Activated CD4-positive, alpha-beta memory T cell treated with anti-CD3 and anti-CD28 coated beads for 36 hours (primary cell): ENCODE measurements at regions of chr16 and their contacts with region 1.

Region 1: GRCh38 chr16:51818342-51818944 is 667.4 kb upstream of the SALL1 start:
- DNase-seq: peak; percentile 9
- H3K4me3 Mint-ChIP-seq: no peak overlapping the region
- H3K27ac Mint-ChIP-seq: no peak overlapping the region
- H3K4me1 Mint-ChIP-seq: no peaks in the 10 kb centered on the region
- H3K27me3 Mint-ChIP-seq: no peaks in the 10 kb centered on the region

Region 2: DNA sequence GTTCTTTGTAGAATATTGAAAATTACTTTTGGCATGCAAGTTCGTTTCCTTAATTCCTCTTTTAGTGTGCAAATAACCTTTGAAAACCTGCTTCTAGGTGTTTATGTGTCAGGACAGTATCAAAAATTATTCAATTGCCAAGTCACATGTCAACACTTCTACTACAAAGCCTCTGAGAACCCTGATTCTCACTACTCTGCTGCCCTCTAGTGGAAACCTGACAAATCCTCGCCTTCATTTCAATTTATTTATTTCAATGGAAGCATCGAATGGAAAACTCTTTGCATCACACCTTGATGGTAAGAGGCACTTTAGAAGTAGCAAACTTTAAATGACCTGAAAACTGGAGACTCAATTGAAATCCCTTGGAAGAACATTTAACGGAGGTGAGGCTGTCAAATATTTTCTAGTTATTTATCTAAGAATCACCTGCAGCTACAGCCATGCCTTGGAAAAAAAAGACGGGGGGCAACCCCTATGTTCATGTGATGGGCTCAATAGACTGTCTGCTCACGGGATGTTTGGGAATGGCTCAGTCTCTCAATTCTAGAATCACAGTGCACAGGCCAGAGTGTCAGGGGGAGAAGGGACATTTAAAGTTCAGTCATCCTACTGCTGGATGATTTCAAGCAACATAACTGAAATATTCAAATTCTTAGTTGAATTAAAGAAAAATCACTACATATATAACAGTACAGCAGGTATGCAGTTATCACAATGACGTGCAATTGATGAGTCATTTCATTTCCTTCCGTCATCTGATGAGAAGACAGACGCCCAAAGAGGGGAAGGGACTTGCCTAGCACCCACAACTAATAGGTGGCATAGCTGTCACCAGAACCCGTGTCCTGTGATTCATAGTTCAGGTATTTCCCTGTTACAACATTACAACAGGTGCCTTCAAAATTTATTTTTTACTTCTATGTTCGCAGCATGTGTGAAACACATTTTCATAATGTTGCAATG is 164.6 kb after region 1 on chr16:
- CTCF ChIA-PET with region 1: interaction called, 5 read pairs
- POLR2A ChIA-PET with region 1: no interaction called
- intact Hi-C with region 1: loop called (anchors 1 kb)
- DNase-seq: no peak
- H3K4me3 Mint-ChIP-seq: no peak overlapping the region
- H3K27ac Mint-ChIP-seq: no peak overlapping the region
- H3K4me1 Mint-ChIP-seq: no peaks in the 10 kb centered on the region
- H3K27me3 Mint-ChIP-seq: no peaks in the 10 kb centered on the region